Activated naive CD4-positive, alpha-beta T cell treated with anti-CD3 and anti-CD28 coated beads for 36 hours (primary cell): ENCODE measurements at regions of chr16 and their contacts with region 1.

Region 1: GRCh38 chr16:89484923-89485679 is 5.3 kb downstream of the ANKRD11 start:
- DNase-seq: peak; percentile 68
- H3K4me3 Mint-ChIP-seq: peak overlapping the region; percentile 57
- H3K27ac Mint-ChIP-seq: peak overlapping the region; percentile 96
- H3K4me1 Mint-ChIP-seq: peaks cover 84% of the 10 kb centered on the region
- H3K27me3 Mint-ChIP-seq: no peaks in the 10 kb centered on the region

Region 2: DNA sequence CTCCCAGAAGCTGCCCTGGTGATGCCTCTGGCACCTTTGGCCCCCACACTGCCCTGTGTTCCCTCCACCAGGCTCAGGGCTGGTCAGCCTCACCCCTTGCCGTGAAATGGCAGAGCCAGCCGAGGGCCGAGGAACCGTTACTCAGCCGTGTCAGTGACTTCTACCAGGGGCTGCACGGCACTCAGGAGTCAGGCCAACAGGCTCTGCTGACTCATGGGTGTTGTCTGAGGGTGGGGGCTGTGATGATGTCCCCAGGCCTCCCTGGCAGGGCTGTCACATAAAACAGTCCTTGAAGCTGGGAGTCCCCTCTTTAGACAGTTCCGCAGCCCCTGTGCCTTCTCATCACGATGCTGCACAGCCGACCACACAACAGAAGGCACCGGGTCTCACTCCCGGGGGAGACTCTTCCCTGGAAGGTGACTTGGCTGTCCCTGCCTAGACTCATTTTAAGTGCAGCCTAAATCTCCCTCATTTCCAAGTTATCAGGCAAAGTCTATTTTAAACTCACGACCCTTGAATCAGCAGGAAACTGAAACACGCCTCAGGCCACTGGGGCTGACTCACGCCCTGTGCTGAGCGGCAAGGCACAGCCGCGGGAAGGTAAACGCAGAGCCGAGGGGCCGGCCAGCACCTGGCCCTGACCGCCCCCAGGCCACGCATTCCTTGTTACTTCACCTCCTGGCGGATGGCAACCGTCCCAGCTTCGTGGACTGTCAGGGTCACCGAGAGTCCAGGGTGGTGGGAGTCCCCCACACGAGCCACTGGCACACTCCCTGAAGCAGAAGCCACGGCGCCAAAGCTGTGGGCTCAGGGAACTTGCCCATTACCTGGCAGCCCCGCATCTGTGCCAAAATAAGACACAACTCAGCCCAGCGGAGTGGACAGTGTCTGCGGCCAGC is 165.0 kb before region 1 on chr16:
- CTCF ChIA-PET with region 1: interaction called, 4 read pairs
- intact Hi-C with region 1: loop called (anchors 1 kb)
- DNase-seq: peak; percentile 50
- H3K4me3 Mint-ChIP-seq: no peak overlapping the region
- H3K27ac Mint-ChIP-seq: peak overlapping the region; percentile 28
- H3K4me1 Mint-ChIP-seq: peaks cover 98% of the 10 kb centered on the region
- H3K27me3 Mint-ChIP-seq: no peaks in the 10 kb centered on the region

Region 3: GRCh38 chr16:89325861-89326471 is 159.1 kb before region 1 on chr16:
- CTCF ChIA-PET with region 1: no interaction called
- intact Hi-C with region 1: loop called (anchors 1 kb)
- DNase-seq: peak; percentile 44
- H3K4me3 Mint-ChIP-seq: no peak overlapping the region
- H3K27ac Mint-ChIP-seq: peak overlapping the region; percentile 46
- H3K4me1 Mint-ChIP-seq: peaks cover 89% of the 10 kb centered on the region
- H3K27me3 Mint-ChIP-seq: no peaks in the 10 kb centered on the region

Region 4: GRCh38 chr16:89409161-89409711 is 75.9 kb before region 1 on chr16:
- CTCF ChIA-PET with region 1: no interaction called
- intact Hi-C with region 1: loop called (anchors 2 kb)
- DNase-seq: peak; percentile 70
- H3K4me3 Mint-ChIP-seq: peak overlapping the region; percentile 21
- H3K27ac Mint-ChIP-seq: peak overlapping the region; percentile 84
- H3K4me1 Mint-ChIP-seq: peaks cover 89% of the 10 kb centered on the region
- H3K27me3 Mint-ChIP-seq: no peaks in the 10 kb centered on the region

Region 5: DNA sequence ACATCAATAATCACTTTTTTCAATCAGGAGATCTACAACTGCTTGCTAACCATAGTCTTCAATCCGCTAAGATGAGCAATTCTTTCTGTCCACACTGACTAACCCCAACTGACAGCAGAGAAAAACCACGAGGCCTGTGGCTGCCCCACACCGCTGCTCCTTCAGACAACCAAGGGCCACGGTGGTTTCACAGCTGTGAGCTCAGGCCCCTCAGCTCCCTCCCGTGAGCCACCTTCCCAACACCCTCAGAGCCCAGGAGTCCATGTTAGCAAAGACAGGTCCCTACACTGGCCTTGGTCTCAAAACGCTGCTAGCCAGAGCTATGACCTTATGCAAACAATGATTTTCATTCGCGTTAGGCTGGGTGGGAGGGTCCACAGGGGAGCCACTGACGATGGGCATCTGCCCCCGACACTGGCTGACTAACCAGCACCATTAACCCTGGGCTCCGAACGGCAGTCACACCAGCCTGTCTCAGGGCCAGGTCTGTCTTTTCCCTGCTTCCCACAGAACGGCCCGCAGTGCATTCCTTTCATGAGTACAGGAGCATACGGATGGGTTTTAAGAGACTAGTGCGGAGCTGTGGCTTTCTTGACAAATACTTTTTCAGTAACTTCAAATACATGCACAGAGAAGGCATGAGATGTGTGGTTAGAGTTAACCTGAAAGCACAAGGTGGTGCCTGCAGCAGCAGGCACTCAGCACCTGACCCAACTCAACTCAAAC is 62.0 kb before region 1 on chr16:
- CTCF ChIA-PET with region 1: interaction called, 3 read pairs
- intact Hi-C with region 1: loop called (anchors 1 kb)
- DNase-seq: peak; percentile 59
- H3K4me3 Mint-ChIP-seq: peak overlapping the region; percentile 1
- H3K27ac Mint-ChIP-seq: peak overlapping the region; percentile 84
- H3K4me1 Mint-ChIP-seq: peaks cover 83% of the 10 kb centered on the region
- H3K27me3 Mint-ChIP-seq: no peaks in the 10 kb centered on the region

Region 6: GRCh38 chr16:89711601-89712273 is 226.6 kb after region 1 on chr16:
- CTCF ChIA-PET with region 1: no interaction called
- intact Hi-C with region 1: no loop called
- DNase-seq: peak; percentile 78
- H3K4me3 Mint-ChIP-seq: peak overlapping the region; percentile 76
- H3K27ac Mint-ChIP-seq: no peak overlapping the region
- H3K4me1 Mint-ChIP-seq: peaks cover 13% of the 10 kb centered on the region
- H3K27me3 Mint-ChIP-seq: no peaks in the 10 kb centered on the region